ENCODE measurements at regions of chr5 and their contacts with region 1.

Region 1: DNA sequence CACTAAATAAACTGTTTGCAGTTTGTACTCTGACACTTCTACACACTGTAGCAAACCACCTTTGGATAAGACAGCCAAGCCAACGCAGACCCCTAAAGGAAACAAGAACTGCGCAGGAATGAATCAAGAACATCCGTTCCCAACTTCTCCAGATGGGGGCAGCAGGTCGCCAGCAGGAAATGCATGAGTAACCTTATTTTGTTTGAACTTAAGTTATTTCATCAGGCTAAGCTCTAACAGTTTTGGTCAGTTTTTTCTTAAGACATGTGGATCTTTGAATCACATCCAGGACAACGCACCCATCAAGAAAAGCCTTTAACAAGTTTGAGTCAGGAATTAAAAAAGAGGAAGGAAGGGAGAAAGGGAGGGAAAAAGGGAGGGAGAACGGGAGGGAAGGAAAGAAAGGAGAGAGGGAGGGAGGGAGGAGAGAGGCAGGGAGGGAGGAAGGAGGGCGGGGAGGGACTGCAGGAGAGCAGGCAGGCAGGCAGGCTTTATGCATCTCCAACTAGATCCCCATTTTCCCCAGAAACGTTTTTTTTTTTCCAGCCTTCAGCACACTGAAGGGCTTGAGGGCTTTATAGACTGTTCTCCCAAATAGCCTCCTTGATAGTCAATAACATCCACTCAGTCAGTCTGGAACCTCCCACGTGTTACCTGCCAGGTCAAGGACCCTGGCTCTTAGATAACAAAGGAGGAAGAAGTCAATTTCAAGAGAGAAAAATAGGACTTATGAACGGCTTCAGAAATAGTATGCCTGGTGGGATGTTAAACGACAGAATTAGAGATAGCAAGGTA is 22.2 kb downstream of the BHMT start:
- ATAC-seq: peak; percentile 70 to 91 (median 82)
- H3K4me3 ChIP-seq: peak overlapping the region; percentile 11 to 19 (median 15)
- H3K27ac ChIP-seq: no peak overlapping the region
- H3K4me1 ChIP-seq: peaks cover 5 to 19% of the 10 kb centered on the region in 2 donors

Region 2: GRCh38 chr5:79011219-79011836 is 122.5 kb before region 1 on chr5:
- in situ Hi-C with region 1: loop called in 1 of 9 experiments (anchors 10 kb)
- ATAC-seq: no peak
- H3K4me3 ChIP-seq: no peak overlapping the region
- H3K27ac ChIP-seq: no peak overlapping the region
- H3K4me1 ChIP-seq: peaks cover 0 to 2% of the 10 kb centered on the region in 2 donors

Region 3: DNA sequence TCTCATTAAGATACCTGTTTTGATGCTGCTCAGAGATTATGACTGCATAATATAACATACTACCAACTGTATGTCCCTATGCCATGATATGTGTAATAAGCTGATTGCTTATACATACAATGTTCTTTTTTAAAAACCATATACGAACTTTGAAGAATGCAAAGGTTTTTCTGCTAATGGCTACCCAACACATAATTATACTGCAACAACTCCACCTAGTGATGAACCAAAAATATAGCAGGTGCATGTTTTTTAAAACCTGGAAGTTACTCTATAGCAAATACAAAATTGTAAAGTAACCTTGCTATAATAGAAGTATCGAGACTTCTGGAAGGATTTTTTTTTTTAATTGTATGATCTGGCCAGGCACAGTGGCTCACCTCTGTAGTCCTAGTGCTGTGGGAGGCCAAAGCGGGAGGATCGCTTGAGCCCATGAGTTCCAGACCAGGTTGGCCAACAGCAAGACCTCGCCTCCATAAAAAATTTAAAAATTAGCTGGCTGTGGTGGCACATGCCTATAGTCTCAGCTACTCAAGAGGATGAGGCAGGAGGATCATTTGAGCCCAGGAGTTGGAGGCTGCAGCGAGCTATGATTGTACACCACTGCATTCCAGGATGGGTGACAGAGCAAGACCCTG is 331.0 kb after region 1 on chr5:
- in situ Hi-C with region 1: loop called in 2 of 9 experiments (anchors 10 to 25 kb)
- ATAC-seq: peak in 3 of 8 experiments; percentile 50 to 72 (median 58)
- H3K4me3 ChIP-seq: no peak overlapping the region
- H3K27ac ChIP-seq: no peak overlapping the region
- H3K4me1 ChIP-seq: no peaks in the 10 kb centered on the region